Heart left ventricle (tissue), 16 donors: ENCODE measurements at regions of chr21 and their contacts with region 1.

Region 1: DNA sequence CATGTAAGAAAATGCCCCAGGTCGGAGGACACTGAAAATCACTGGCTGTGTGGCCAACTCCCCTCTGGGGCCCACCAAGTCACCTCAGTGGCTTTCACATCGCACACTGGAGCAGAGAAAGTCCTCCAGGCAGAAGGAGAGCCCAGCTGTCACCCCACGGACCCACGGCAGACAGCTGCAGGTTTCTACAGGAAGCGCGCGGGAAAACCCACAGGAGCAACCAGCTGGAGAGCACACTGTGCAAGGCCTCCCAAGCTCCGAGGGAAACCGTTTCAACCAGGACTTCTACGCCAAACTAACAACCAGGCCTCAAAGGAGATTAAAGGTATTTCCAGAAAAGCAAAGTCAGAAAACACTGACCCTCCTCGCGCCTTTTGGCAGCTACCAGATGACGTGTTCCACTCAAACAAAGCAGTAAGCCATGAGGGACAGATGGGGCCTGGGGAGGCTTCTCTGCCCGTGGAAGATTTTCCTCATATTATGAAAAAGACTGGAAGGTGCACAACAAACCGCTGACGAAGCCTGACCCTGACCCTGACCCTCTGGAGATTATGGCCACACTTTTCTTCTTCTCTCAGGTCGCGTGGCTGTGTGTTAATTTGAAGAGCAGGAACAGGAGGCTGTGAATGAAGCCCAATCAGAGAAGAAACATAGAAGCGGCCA is 21.0 kb downstream of the WDR4 start:
- DNase-seq: no peak
- ATAC-seq: no peak
- H3K4me3 ChIP-seq: no peak overlapping the region
- H3K27ac ChIP-seq: no peak overlapping the region
- H3K4me1 ChIP-seq: peaks cover 0 to 12% (median 0%) of the 10 kb centered on the region in 12 donors
- H3K27me3 ChIP-seq: no peaks in the 10 kb centered on the region
- CTCF ChIP-seq: no peak
- POLR2A ChIP-seq: no peak

Region 2: DNA sequence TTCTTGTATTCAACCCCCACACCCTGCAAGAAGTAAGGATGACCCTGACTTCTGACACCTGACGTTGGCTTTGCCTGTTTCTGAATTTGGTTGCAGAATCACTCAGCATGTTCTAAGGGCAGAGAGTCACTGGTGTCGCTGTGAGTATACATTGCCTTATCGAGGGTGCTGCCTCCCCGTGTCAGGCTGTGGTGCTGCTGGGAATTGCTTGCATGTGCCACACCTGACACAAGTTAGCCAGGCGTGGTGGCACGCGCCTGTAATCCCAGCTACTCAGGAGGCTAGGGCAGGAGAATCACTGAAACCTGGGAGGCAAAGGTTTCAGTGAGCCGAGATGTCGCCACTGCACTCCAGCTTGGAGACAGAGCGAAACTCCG is 24.9 kb before region 1 on chr21:
- intact Hi-C with region 1: loop called in 1 of 10 experiments (anchors 2 kb)
- DNase-seq: peak in 1 of 5 donors; percentile 16
- ATAC-seq: peak in 1 of 4 donors; percentile 35
- H3K4me3 ChIP-seq: no peak overlapping the region
- H3K27ac ChIP-seq: no peak overlapping the region
- H3K4me1 ChIP-seq: peaks cover 0 to 6% (median 0%) of the 10 kb centered on the region in 12 donors
- H3K27me3 ChIP-seq: peaks cover 5 to 46% (median 27%) of the 10 kb centered on the region in 9 donors
- CTCF ChIP-seq: peak in 3 of 12 donors; percentile 10 to 46 (median 11)
- POLR2A ChIP-seq: no peak